ENCODE measurements at regions of chr5 and their contacts with region 1.

Region 1: DNA sequence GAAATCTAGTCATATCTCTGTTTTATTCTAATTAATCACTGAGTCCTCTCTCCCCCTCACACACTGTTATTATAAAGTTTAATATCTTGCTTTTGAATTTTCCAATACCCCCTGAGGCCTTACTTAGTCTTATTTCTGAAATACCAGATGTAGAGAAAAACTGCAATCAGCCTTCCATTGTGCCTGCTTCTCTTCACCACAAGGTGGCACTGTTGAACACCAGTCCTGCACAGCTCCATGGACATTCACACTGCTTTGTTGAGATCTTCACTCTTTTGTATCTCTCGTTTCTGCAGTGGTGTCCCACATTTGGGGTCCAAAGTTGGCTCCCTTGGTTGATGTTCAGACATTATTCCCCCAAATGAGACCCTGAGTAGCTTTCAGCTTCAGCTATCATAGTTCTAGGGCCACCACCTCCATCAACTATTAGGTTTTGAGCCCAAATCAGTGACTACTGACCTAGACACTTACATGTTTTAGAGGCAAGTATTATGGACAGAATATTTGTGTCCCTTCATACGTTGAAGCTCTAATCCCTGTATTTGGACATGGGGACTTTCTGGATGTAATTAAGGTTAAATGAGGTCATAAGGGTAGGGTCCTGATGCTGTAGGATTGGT is 24.3 kb downstream of the BOD1 start:
- DNase-seq: no peak
- H3K4me3 ChIP-seq: no peak overlapping the region
- H3K27ac ChIP-seq: no peak overlapping the region
- H3K4me1 ChIP-seq: no peaks in the 10 kb centered on the region; a peak in 1 of 7 replicates
- H3K27me3 ChIP-seq: no peaks in the 10 kb centered on the region
- CTCF ChIP-seq: peak; percentile 48 to 88 (median 66)
- EP300 ChIP-seq: no peak
- POLR2A ChIP-seq: no peak
- RAD21 ChIP-seq: peak; percentile 78 to 79

Region 2: DNA sequence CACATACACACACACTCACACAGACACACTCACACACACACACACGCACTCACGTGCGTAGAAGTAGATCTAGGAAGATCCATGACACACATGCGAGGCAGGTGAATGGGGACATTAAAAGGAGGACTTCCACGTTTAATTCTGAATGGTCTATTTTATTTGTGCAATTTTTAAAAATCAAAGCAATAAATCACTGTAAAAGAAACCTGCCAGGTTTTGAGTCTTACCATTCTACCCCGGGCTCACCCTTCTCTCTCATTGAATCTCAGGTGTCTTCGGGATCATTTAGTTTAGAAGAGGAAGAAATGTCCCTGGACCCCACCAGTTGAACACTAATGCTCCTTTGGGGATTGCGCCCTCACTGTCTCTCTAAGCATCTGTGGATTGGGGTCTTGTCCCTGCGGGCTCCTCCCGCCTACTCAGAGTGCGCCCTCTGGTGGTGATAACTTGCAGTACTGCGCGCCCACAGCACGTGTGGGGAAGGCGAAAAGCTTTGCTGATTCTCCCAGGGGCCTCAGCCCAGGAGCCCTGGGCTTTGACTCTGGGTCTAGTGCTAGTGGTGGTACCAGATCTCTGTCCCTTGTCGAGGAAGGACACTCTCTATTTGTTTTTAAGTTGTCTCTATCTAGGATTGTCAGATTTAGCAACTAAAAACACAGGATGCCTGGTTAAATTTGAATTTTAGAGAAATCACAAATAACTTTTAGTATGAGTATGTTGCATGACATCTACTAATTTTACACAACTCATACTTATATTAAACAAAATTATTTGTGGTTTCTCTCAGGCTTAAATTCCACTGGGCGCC is 10.5 kb before region 1 on chr5:
- CTCF ChIA-PET with region 1: interaction called, 25 read pairs
- POLR2A ChIA-PET with region 1: interaction called, 4 read pairs
- DNase-seq: peak; percentile 49 to 96
- H3K4me3 ChIP-seq: no peak overlapping the region
- H3K27ac ChIP-seq: no peak overlapping the region
- H3K4me1 ChIP-seq: no peaks in the 10 kb centered on the region
- H3K27me3 ChIP-seq: no peaks in the 10 kb centered on the region
- CTCF ChIP-seq: peak; percentile 90 to 94 (median 94)
- EP300 ChIP-seq: no peak
- POLR2A ChIP-seq: no peak
- RAD21 ChIP-seq: peak; percentile 80 to 86

Region 3: DNA sequence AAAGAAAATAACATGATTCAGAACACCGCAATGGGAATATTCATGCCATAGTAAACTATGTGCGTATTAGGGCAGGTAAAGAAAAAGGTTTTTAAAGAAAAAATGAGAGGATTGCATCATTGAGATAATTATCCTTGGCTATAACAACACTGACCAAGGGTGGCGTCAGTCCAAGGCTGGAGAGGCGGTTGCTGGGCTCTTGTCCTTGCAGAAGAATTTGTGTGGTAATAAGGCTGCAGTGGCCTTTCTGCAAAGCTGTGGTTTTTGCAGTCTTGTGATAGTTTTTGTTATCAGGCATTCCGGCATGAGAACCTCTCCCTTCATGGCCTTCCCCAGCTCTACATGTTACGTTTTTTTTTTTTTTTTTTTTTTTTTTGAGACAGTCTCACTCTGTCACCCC is 10.3 kb after region 1 on chr5:
- CTCF ChIA-PET with region 1: interaction called, 20 read pairs
- POLR2A ChIA-PET with region 1: interaction called, 4 read pairs
- DNase-seq: no peak
- H3K4me3 ChIP-seq: no peak overlapping the region
- H3K27ac ChIP-seq: no peak overlapping the region
- H3K4me1 ChIP-seq: no peaks in the 10 kb centered on the region
- H3K27me3 ChIP-seq: no peaks in the 10 kb centered on the region
- CTCF ChIP-seq: peak in 1 of 3 experiments; percentile 25; a peak in 1 of 4 replicates
- EP300 ChIP-seq: no peak
- POLR2A ChIP-seq: no peak
- RAD21 ChIP-seq: peak in 1 of 2 experiments; percentile 6; a peak in 2 of 4 replicates

Measured in H1 (cell line).